PC-9 (cell line): ENCODE measurements at regions of chr11 and their contacts with region 1.

Region 1: DNA sequence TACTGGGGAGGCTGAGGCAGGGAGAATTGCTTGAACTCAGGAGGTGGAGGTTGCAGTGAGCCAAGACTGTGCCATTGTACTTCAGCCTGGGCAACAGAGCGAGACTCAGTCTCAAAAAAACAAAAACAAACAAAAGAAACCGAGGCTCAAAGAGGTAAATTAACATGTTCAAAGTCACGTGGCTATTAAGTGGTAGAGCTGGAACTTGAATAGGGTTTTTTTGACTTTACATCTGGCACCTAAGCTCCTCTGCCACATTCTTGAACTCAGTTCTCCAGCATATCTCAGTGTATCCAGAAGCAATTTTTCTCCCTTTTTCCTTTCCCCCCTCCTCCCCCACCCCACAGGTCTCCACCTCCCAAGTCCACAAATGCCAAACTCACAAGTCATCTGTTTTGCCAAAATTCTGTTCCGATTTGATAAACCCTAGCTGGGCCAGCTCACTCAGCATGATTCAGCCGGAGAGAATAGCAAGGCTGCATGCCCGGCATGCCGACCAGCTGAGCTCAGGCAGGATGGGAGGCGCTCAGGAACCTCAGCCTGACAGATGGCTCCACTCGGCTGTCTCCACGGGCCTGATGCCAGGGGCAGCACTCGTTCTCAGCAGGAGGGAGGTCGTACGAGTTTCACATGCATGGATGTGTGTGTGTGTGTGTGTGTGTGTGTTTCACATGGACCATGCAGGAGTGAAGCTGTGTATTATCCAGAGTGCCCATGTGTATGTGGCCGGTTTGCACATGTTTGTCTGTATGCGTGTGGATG is 63.2 kb upstream of the RRAS2 start:
- DNase-seq: peak; percentile 83 to 95
- H3K4me3 ChIP-seq: no peak overlapping the region
- H3K27ac ChIP-seq: peak overlapping the region; percentile 85
- H3K4me1 ChIP-seq: peaks cover 41% of the 10 kb centered on the region
- H3K27me3 ChIP-seq: no peaks in the 10 kb centered on the region
- CTCF ChIP-seq: no peak

Region 2: DNA sequence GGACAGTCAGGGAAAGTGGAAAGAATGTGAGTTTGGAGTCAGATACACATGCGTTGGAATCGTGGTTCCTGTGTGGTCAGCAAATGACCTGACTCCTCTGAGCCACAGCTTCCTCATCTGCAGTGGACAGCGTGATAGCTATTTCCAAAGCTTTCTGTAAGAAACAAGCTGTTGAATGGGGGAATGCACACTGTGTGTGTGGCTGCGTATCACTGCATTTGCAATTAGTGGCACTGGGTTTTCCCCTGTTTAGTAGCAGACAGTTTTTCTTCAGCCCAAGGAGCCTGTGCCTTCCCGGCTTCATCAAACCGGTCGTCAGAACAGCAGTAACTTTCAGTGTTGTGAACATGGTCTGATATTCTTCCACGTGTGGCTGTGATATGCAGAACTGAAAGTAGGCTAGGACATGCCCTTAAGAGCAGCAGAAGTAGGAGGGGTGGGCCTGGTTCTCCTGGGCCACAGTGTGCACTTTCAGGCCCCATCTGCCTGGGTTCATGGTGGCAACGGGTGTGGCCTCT is 184.7 kb before region 1 on chr11:
- CTCF ChIA-PET with region 1: no interaction called
- POLR2A ChIA-PET with region 1: no interaction called
- intact Hi-C with region 1: no loop called
- DNase-seq: no peak
- H3K4me3 ChIP-seq: no peak overlapping the region
- H3K27ac ChIP-seq: no peak overlapping the region
- H3K4me1 ChIP-seq: no peaks in the 10 kb centered on the region
- H3K27me3 ChIP-seq: no peaks in the 10 kb centered on the region; the same call in 1 of the 2 replicates
- CTCF ChIP-seq: no peak

Region 3: GRCh38 chr11:14435717-14436512 is 13.7 kb after region 1 on chr11:
- CTCF ChIA-PET with region 1: no interaction called
- POLR2A ChIA-PET with region 1: no interaction called
- intact Hi-C with region 1: no loop called
- DNase-seq: no peak
- H3K4me3 ChIP-seq: no peak overlapping the region
- H3K27ac ChIP-seq: no peak overlapping the region
- H3K4me1 ChIP-seq: no peaks in the 10 kb centered on the region
- H3K27me3 ChIP-seq: no peaks in the 10 kb centered on the region
- CTCF ChIP-seq: no peak

Region 4: DNA sequence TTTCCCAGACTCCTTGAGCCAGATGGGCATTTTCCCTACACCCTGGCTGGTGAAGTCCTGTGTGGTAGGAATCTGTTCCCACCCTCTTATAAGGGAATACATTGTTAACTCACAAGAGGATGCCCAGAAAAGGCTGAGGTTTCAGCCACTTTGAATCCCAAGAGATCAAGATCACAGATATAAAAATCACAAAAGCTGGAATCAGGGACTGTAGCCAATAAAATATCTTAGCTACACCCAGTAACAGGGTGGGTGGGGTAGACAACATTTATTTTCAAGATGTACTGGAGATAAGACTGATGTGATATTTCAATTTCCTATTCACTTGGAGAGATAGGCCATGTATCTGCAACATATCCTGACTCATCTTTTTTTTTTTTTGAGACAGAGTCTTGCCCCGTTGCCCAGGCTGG is 27.1 kb after region 1 on chr11:
- CTCF ChIA-PET with region 1: interaction called, 3 read pairs
- POLR2A ChIA-PET with region 1: interaction called, 3 read pairs
- intact Hi-C with region 1: loop called (anchors 2 kb)
- DNase-seq: peak in 1 of 2 experiments; percentile 42
- H3K4me3 ChIP-seq: no peak overlapping the region
- H3K27ac ChIP-seq: peak overlapping the region; percentile 73
- H3K4me1 ChIP-seq: peaks cover 53% of the 10 kb centered on the region
- H3K27me3 ChIP-seq: no peaks in the 10 kb centered on the region
- CTCF ChIP-seq: no peak

Region 5: GRCh38 chr11:14519917-14520746 is 97.9 kb after region 1 on chr11 and contains the start of gene PSMA1:
- CTCF ChIA-PET with region 1: no interaction called
- POLR2A ChIA-PET with region 1: no interaction called
- intact Hi-C with region 1: no loop called
- DNase-seq: peak; percentile 83 to 86
- H3K4me3 ChIP-seq: peak within 1 kb of the TSS; percentile 98
- H3K27ac ChIP-seq: peak within 1 kb of the TSS; percentile 93
- H3K4me1 ChIP-seq: no peaks in the 10 kb centered on the region; the same call in 1 of the 2 replicates
- H3K27me3 ChIP-seq: no peaks in the 10 kb centered on the region
- CTCF ChIP-seq: peak; percentile 26; the same call in 1 of the 2 replicates
- total RNA-seq, gene PSMA1: 92.2 and 143 TPM in 2 replicates